ENCODE measurements at regions of chr1 and their contacts with region 1.

Region 1: GRCh38 chr1:148318123-148318903 is 164.8 kb downstream of the PPIAL4G start:
- DNase-seq: peak in 1 of 2 experiments; percentile 63
- H3K4me3 ChIP-seq: peak overlapping the region; percentile 67 to 73 (median 70)
- H3K27ac ChIP-seq: no peak overlapping the region
- H3K4me1 ChIP-seq: peaks cover 0 to 3% (median 1%) of the 10 kb centered on the region in 4 experiments; a peak in 2 of 7 replicates
- H3K27me3 ChIP-seq: peaks cover 4 to 18% (median 11%) of the 10 kb centered on the region in 4 experiments; a peak in 6 of 7 replicates
- CTCF ChIP-seq: no peak
- EP300 ChIP-seq: no peak
- POLR2A ChIP-seq: peak in 1 of 2 experiments; percentile 52; a peak in 2 of 3 replicates
- RAD21 ChIP-seq: no peak

Region 2: GRCh38 chr1:147757015-147758000 is 561.0 kb before region 1 on chr1:
- CTCF ChIA-PET with region 1: no interaction called
- POLR2A ChIA-PET with region 1: no interaction called
- DNase-seq: no peak
- H3K4me3 ChIP-seq: no peak overlapping the region
- H3K27ac ChIP-seq: no peak overlapping the region
- H3K4me1 ChIP-seq: no peaks in the 10 kb centered on the region
- H3K27me3 ChIP-seq: no peaks in the 10 kb centered on the region; a peak in 1 of 7 replicates
- CTCF ChIP-seq: no peak
- EP300 ChIP-seq: no peak
- POLR2A ChIP-seq: no peak
- RAD21 ChIP-seq: no peak

Region 3: GRCh38 chr1:147919896-147920295 is 398.4 kb before region 1 on chr1:
- CTCF ChIA-PET with region 1: no interaction called
- POLR2A ChIA-PET with region 1: no interaction called
- DNase-seq: no peak
- H3K4me3 ChIP-seq: no peak overlapping the region
- H3K27ac ChIP-seq: no peak overlapping the region
- H3K4me1 ChIP-seq: no peaks in the 10 kb centered on the region; a peak in 1 of 7 replicates
- H3K27me3 ChIP-seq: no peaks in the 10 kb centered on the region
- CTCF ChIP-seq: no peak
- EP300 ChIP-seq: no peak
- POLR2A ChIP-seq: no peak
- RAD21 ChIP-seq: no peak

Region 4: DNA sequence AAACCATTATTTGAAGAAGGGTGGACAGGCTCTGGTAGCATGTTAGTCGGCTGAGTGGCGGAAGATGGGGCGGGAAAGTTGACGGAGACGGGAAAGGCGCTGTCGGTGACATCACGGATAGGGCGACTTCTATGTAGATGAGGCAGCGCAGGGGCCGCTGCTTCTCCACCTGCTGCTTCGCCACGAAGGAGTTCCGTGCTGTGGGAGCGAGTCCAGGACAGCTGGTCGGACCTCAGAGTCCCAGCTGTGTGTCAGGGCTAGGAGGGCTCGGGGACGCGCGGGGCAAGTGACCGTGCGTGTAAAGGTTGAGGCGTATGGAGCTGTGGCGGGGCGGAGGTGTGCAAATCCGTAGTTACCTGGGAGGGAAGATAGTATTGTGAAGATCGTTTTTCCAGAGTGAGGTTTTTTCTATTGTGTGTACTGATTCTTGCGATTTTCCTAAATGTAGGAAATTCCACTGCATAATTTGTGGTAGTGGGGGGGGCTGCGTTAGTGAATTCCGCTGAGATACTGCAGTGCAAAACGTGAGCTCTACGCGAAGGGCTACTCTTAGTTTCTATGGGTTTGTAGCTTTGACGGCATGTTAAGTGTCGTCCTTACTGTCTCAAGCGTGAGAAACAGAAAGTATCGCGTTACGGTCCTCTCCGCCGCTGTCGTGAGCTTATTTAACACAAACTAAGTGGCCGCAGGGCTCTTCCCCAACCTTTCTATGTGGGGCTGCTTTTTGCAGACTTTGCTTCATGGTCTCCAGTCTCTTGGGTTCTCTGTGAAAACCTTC is 55.0 kb before region 1 on chr1:
- CTCF ChIA-PET with region 1: no interaction called
- POLR2A ChIA-PET with region 1: interaction called, 28 read pairs
- DNase-seq: peak; percentile 86 to 93
- H3K4me3 ChIP-seq: peak overlapping the region; percentile 52 to 76 (median 64)
- H3K27ac ChIP-seq: peak overlapping the region; percentile 100
- H3K4me1 ChIP-seq: no peaks in the 10 kb centered on the region; a peak in 1 of 7 replicates
- H3K27me3 ChIP-seq: no peaks in the 10 kb centered on the region
- CTCF ChIP-seq: peak in 1 of 3 experiments; percentile 3; a peak in 1 of 4 replicates
- EP300 ChIP-seq: peak in 1 of 2 experiments; percentile 84; a peak in 1 of 3 replicates
- POLR2A ChIP-seq: peak; percentile 100
- RAD21 ChIP-seq: 0 out of 4 replicates have a peak, but pooled peaks have one; percentile 2 to 11

Region 5: GRCh38 chr1:148290881-148291280 is 27.4 kb before region 1 on chr1:
- CTCF ChIA-PET with region 1: no interaction called
- POLR2A ChIA-PET with region 1: no interaction called
- DNase-seq: no peak
- H3K4me3 ChIP-seq: no peak overlapping the region
- H3K27ac ChIP-seq: no peak overlapping the region
- H3K4me1 ChIP-seq: no peaks in the 10 kb centered on the region
- H3K27me3 ChIP-seq: no peaks in the 10 kb centered on the region
- CTCF ChIP-seq: no peak
- EP300 ChIP-seq: no peak
- POLR2A ChIP-seq: no peak
- RAD21 ChIP-seq: no peak

Region 6: GRCh38 chr1:148307583-148308190 is 10.6 kb before region 1 on chr1:
- CTCF ChIA-PET with region 1: interaction called, 3 read pairs
- POLR2A ChIA-PET with region 1: interaction called, 12 read pairs
- DNase-seq: no peak
- H3K4me3 ChIP-seq: no peak overlapping the region
- H3K27ac ChIP-seq: no peak overlapping the region
- H3K4me1 ChIP-seq: no peaks in the 10 kb centered on the region
- H3K27me3 ChIP-seq: peaks cover 9 to 39% (median 24%) of the 10 kb centered on the region in 4 experiments
- CTCF ChIP-seq: no peak
- EP300 ChIP-seq: no peak
- POLR2A ChIP-seq: no peak
- RAD21 ChIP-seq: no peak

Region 7: GRCh38 chr1:148328884-148329283 is 10.6 kb after region 1 on chr1:
- CTCF ChIA-PET with region 1: interaction called, 3 read pairs
- POLR2A ChIA-PET with region 1: interaction called, 27 read pairs
- DNase-seq: no peak
- H3K4me3 ChIP-seq: no peak overlapping the region
- H3K27ac ChIP-seq: no peak overlapping the region
- H3K4me1 ChIP-seq: no peaks in the 10 kb centered on the region
- H3K27me3 ChIP-seq: no peaks in the 10 kb centered on the region
- CTCF ChIP-seq: no peak
- EP300 ChIP-seq: no peak
- POLR2A ChIP-seq: no peak
- RAD21 ChIP-seq: no peak

Measured in H1 (cell line).